Activated CD4-positive, alpha-beta T cell treated with anti-CD3 and anti-CD28 coated beads, Interleukin-2, amount 10 ng/mL, durations not matched to agents 24 days and 14 days (primary cell): ENCODE measurements at regions of chr11 and their contacts with region 1.

Region 1: GRCh38 chr11:104705490-104706190 is 192.6 kb downstream of the CASP12 start:
- DNase-seq: peak; percentile 93
- H3K4me3 Mint-ChIP-seq: peak overlapping the region; percentile 86
- H3K27ac Mint-ChIP-seq: peak overlapping the region; percentile 94
- H3K4me1 Mint-ChIP-seq: peaks cover 42% of the 10 kb centered on the region
- H3K27me3 Mint-ChIP-seq: no peaks in the 10 kb centered on the region

Region 2: DNA sequence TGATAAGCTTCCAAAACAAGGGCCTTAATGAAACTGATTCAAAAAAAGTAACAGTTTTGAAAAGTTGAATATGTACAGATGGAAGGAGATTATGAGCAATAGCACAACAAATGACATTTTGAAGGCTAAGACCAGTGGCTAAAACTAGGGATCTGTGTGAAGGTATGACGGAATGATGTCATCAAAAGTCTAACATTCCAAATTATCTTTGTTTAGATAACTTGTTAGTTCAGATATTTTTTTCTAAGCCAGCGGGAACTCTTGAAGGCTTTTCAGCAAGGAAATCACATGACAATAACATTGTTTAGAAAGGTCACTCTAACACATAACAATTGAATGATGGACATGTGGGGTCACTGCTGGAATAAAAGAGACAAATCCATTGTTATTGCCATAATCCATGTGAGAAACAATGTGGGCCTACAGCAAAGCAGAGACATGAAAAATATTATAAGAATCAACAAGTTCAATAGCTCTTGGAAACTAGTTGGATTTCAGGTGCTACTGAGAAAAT is 67.9 kb before region 1 on chr11:
- intact Hi-C with region 1: no loop called
- DNase-seq: no peak
- H3K4me3 Mint-ChIP-seq: no peak overlapping the region
- H3K27ac Mint-ChIP-seq: no peak overlapping the region
- H3K4me1 Mint-ChIP-seq: peaks cover 4% of the 10 kb centered on the region
- H3K27me3 Mint-ChIP-seq: no peaks in the 10 kb centered on the region

Region 3: GRCh38 chr11:104668797-104669463 is 36.7 kb before region 1 on chr11:
- intact Hi-C with region 1: loop called (anchors 1 kb)
- DNase-seq: no peak
- H3K4me3 Mint-ChIP-seq: no peak overlapping the region
- H3K27ac Mint-ChIP-seq: peak overlapping the region; percentile 42
- H3K4me1 Mint-ChIP-seq: peaks cover 14% of the 10 kb centered on the region
- H3K27me3 Mint-ChIP-seq: peaks cover 14% of the 10 kb centered on the region

Region 4: GRCh38 chr11:104694259-104695064 is 11.2 kb before region 1 on chr11:
- intact Hi-C with region 1: no loop called
- DNase-seq: no peak
- H3K4me3 Mint-ChIP-seq: no peak overlapping the region
- H3K27ac Mint-ChIP-seq: no peak overlapping the region
- H3K4me1 Mint-ChIP-seq: peaks cover 2% of the 10 kb centered on the region
- H3K27me3 Mint-ChIP-seq: no peaks in the 10 kb centered on the region

Region 5: GRCh38 chr11:104799251-104799650 is 93.6 kb after region 1 on chr11:
- intact Hi-C with region 1: loop called (anchors 10 kb)
- DNase-seq: no peak
- H3K4me3 Mint-ChIP-seq: peak overlapping the region; percentile 69
- H3K27ac Mint-ChIP-seq: peak overlapping the region; percentile 81
- H3K4me1 Mint-ChIP-seq: peaks cover 28% of the 10 kb centered on the region
- H3K27me3 Mint-ChIP-seq: no peaks in the 10 kb centered on the region

Region 6: GRCh38 chr11:104968355-104968855 is 262.8 kb after region 1 on chr11 and contains the start of gene CASP4:
- intact Hi-C with region 1: loop called (anchors 5 kb)
- DNase-seq: peak; percentile 72
- H3K4me3 Mint-ChIP-seq: peak within 1 kb of the TSS; percentile 95
- H3K27ac Mint-ChIP-seq: peak within 1 kb of the TSS; percentile 82
- H3K4me1 Mint-ChIP-seq: peaks cover 30% of the 10 kb centered on the region
- H3K27me3 Mint-ChIP-seq: no peaks in the 10 kb centered on the region
- total RNA-seq, gene CASP4: 25.0 and 29.2 TPM in 2 replicates

Region 7: GRCh38 chr11:105100206-105100605 is 394.6 kb after region 1 on chr11:
- intact Hi-C with region 1: loop called (anchors 5 kb)
- DNase-seq: peak; percentile 74
- H3K4me3 Mint-ChIP-seq: peak overlapping the region; percentile 85
- H3K27ac Mint-ChIP-seq: peak overlapping the region; percentile 81
- H3K4me1 Mint-ChIP-seq: peaks cover 29% of the 10 kb centered on the region
- H3K27me3 Mint-ChIP-seq: no peaks in the 10 kb centered on the region